ENCODE measurements at regions of chr7 and their contacts with region 1.

Region 1: GRCh38 chr7:140159487-140159886 is 17.3 kb downstream of the KDM7A start:
- DNase-seq: no peak
- ATAC-seq: no peak

Region 2: DNA sequence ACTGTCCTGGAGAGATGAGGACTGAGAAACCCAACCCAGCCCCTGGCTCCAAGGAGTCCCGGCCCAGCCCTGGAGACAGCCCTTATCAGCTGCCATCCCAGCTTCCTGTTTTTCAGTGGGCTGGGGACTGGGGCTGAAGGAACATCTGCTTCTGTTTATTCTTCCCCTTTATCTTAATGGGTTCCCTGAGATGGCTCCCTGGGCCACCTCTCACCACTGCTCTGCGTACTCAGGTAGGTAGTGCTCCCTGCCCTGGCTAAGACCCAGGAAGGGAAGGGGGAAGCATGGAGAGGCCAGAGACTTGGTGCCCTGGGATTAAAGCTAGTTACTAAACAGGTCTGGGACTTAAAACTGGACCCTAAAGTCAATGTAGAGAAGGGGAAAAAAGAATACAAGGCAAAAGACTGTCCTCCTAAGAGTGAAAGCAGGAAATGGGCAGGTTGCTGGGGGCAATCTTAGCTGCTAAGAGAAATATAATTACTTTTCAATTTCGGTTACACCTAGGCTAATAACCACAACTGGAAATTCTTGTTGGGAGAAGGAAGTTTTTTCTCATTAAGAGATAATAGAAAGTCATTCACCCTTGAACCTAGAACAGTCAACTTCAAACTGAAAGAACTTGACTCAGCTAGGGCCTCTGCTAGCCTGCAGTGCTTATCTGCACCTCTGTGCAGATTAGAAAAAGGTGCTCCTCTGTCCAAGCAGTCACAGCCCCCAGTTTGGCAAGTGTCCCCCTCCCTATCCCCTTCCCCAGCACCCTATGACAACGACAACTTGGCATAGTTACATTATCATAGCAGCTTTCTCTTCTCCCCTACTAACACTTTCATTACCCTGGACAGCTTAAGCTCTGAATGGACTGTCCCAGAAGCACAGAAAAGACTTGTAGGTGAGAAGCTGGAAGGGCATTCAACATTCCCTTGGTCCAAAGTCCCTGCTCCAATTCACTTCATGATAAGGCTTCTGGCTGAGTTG is 82.9 kb after region 1 on chr7:
- intact Hi-C with region 1: no loop called
- DNase-seq: peak; percentile 37
- ATAC-seq: peak; percentile 64

Region 3: DNA sequence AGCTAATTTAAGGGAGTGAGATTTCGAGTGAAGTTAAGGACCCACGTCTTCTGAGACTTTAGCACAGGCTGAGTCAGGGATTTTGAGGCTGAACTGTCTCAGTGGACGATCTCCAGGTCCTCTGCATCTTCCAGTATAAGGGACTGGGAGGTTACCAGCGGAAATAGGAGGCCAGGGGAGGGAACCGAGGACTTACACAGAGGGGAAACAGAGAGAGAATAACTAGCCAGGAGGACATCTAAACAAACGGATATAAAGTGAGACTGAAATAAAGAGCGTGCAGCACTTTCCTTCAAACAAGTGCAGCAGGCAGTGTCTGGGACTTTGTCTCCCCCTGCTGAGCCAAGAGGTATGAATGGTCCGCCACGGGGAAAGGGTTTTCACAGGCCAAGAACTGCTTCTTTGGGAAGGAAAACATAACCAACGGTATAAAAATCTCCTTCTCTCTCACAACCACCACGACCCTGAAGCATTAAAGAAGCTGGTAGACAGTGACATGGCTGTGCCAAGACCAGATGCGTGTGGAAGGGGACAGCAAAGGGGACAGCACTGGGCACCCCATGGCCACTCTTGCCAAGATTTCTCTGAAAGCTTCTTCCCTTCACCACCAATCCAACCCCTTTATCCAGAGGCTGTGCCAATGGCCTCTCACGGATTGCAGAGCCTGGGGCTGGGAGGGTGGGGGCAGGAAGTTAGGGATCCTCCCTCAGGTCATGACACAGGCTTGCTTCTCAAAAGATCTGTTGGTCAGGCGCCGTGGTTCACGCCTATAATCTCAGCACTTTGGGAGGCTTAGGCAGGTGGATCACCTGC is 166.8 kb after region 1 on chr7:
- intact Hi-C with region 1: loop called (anchors 5 kb)
- DNase-seq: peak; percentile 64
- ATAC-seq: peak; percentile 93